PC-9 (cell line): ENCODE measurements at regions of chr7 and their contacts with region 1.

Region 1: DNA sequence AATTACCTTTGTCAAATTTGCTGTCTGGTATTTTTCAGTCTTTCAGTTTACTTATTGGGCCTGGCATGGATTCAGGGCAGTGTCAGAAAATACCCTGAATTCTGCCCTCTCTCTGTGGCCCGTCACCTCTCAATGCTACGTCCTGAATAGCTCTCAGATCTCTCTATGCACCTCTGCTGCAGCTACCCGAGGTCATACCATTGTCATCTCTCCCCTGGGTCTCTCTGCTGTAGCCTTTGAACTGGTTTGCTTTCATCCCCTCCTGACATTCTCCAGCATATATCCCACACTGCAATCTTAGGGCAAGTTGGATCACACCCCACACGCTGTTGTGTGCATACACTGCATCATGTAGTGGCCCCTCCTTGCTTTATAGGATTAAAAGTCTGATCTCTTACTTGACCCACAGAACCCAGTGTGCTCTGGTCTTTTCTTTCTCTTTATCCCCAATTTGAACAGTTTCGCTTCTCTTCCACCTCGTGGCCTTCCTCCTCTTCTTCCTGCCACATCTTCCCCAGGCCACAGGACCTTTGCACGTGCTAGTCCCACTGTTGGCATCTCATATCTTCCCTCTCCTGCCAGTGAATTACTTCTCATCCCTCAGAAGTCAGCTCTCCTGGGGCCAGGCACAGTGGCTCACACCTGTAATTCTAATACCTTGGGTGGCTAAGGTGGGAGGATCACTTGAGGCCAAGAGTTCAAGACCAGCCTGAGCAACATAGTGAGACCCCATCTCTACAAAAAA is 372.9 kb downstream of the GALNT17 start:
- DNase-seq: no peak
- H3K4me3 ChIP-seq: no peak overlapping the region
- H3K27ac ChIP-seq: no peak overlapping the region
- H3K4me1 ChIP-seq: no peaks in the 10 kb centered on the region
- H3K27me3 ChIP-seq: peaks cover 27% of the 10 kb centered on the region
- CTCF ChIP-seq: no peak

Region 2: DNA sequence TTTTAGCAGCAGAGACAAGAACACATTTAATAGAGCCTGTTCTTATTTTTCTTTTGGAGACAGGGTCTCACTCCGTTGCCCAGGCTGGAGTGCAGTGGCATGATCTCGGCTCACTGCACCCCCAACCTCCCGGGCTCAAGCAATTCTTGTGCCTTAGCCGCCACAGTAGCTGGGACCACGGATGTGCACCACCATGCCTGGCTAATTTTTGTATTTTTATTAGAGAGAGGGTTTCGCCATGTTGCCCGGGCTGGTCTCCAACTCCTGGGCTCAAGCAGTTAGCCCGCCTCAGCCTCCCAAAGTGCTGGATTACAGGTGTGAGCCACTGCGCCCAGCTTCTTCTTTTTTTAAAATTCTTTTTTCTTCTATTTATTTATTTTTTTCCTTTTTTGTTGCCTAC is 349.6 kb before region 1 on chr7:
- CTCF ChIA-PET with region 1: no interaction called
- POLR2A ChIA-PET with region 1: no interaction called
- intact Hi-C with region 1: no loop called
- DNase-seq: no peak
- H3K4me3 ChIP-seq: no peak overlapping the region
- H3K27ac ChIP-seq: no peak overlapping the region
- H3K4me1 ChIP-seq: no peaks in the 10 kb centered on the region
- H3K27me3 ChIP-seq: peaks cover 32% of the 10 kb centered on the region
- CTCF ChIP-seq: no peak

Region 3: GRCh38 chr7:71286336-71286735 is 218.5 kb before region 1 on chr7:
- CTCF ChIA-PET with region 1: no interaction called
- POLR2A ChIA-PET with region 1: no interaction called
- intact Hi-C with region 1: no loop called
- DNase-seq: no peak
- H3K4me3 ChIP-seq: no peak overlapping the region
- H3K27ac ChIP-seq: no peak overlapping the region
- H3K4me1 ChIP-seq: no peaks in the 10 kb centered on the region
- H3K27me3 ChIP-seq: peaks cover 39% of the 10 kb centered on the region
- CTCF ChIP-seq: no peak

Region 4: GRCh38 chr7:71521506-71521905 is 16.6 kb after region 1 on chr7:
- CTCF ChIA-PET with region 1: no interaction called
- POLR2A ChIA-PET with region 1: no interaction called
- intact Hi-C with region 1: loop called (anchors 1 kb)
- DNase-seq: no peak
- H3K4me3 ChIP-seq: no peak overlapping the region
- H3K27ac ChIP-seq: no peak overlapping the region
- H3K4me1 ChIP-seq: no peaks in the 10 kb centered on the region
- H3K27me3 ChIP-seq: peaks cover 7% of the 10 kb centered on the region
- CTCF ChIP-seq: no peak

Region 5: DNA sequence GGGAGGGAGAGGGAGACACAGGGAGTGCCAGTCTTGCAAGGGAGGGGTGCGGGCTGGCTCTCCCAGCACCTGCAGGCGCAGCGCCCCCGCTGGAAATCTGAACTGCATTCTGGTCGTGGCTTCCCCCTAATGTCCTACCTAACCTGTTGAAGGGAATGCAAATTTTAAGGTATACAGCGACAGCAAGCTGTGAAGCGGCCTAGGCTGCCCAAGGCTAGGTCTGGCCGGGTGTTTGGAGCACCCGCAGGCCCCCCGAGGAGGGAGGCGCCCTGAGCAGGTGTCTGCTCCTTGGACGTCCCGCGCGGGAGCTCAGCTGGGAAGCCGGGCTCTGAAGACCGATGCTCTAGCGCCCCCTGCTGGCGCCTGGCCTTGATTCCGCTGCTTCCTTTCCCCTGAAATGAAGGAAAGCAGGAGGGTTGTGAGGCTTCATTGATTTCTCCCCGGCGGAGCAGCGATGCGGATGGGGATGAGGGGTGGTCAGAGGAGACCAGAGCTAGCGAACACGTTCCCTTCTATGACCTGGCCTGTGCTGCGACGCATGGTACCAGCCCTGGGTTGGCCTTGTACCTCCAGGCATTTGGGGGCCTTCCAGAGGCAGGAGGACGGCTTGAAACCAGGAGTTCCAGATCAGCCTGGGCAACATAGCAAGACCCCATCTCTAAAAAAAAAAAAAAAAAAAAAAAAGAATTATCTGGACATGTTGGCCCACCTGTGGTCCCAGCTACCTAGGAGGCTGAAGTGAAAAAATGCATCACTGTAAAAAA is 228.4 kb after region 1 on chr7:
- CTCF ChIA-PET with region 1: no interaction called
- POLR2A ChIA-PET with region 1: no interaction called
- intact Hi-C with region 1: no loop called
- DNase-seq: peak; percentile 46 to 64
- H3K4me3 ChIP-seq: no peak overlapping the region
- H3K27ac ChIP-seq: no peak overlapping the region
- H3K4me1 ChIP-seq: no peaks in the 10 kb centered on the region
- H3K27me3 ChIP-seq: peaks cover 14% of the 10 kb centered on the region
- CTCF ChIP-seq: peak; percentile 91